PC-9 (cell line): ENCODE measurements at regions of chr7 and their contacts with region 1.

Region 1: DNA sequence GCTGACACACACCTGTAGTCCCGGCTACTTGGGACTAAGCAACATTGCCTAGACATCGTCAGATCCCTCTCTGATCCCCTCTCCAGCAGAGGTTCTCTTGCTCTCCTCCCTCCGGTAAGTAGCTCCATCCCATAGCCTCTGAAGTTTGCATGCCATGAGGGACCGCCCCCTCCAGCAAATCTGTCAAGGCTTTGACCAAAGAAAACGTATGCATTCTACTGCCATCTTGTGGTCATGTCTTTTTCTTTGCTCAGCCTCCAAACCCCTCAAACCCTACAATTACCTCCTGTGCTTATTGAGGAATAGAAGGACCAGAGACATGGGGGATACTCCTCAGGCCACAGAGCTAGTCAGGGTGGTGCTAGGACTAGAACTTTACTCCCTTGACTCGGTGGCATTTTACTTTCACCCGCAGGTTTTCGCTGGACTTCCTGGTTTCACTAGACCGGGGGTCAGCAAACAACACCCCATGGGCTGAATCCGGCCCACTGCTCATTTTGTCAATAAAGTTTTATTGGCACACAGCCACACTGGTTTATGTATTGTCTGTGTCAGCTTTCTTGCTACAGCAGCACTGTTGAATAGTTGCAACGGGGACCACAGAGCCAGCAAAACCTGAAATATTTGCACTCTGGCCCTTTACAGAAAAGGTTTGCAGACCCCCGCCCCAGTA is 202.6 kb upstream of the FOXK1 start:
- DNase-seq: peak; percentile 16 to 50
- H3K4me3 ChIP-seq: no peak overlapping the region
- H3K27ac ChIP-seq: no peak overlapping the region
- H3K4me1 ChIP-seq: no peaks in the 10 kb centered on the region
- H3K27me3 ChIP-seq: peaks cover 27% of the 10 kb centered on the region
- CTCF ChIP-seq: peak; percentile 67

Region 2: DNA sequence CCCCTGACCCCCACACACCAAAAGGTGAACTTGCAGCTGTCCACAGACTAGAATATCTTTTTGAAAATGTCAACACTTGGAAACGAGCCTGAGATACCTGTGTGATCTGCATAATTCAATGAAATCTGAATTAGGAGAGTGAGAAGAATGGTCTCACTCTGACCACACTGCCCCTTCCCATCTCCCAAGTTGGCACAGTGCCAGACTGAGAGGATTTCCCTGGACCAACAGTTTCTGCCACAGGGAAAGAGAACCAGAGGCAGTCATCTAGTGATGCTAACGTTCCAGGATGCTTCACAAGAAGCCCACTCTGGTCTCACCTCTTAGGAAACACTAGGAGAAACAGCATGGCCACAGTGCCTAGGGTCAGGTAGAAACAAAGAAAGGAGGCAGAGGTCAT is 699.5 kb before region 1 on chr7:
- CTCF ChIA-PET with region 1: interaction called, 20 read pairs
- POLR2A ChIA-PET with region 1: no interaction called
- intact Hi-C with region 1: no loop called
- DNase-seq: peak in 1 of 2 experiments; percentile 6
- H3K4me3 ChIP-seq: no peak overlapping the region
- H3K27ac ChIP-seq: no peak overlapping the region
- H3K4me1 ChIP-seq: no peaks in the 10 kb centered on the region
- H3K27me3 ChIP-seq: peaks cover 40% of the 10 kb centered on the region
- CTCF ChIP-seq: no peak

Region 3: GRCh38 chr7:4650433-4651047 is 171.0 kb after region 1 on chr7:
- CTCF ChIA-PET with region 1: no interaction called
- POLR2A ChIA-PET with region 1: no interaction called
- intact Hi-C with region 1: no loop called
- DNase-seq: no peak
- H3K4me3 ChIP-seq: no peak overlapping the region
- H3K27ac ChIP-seq: no peak overlapping the region
- H3K4me1 ChIP-seq: no peaks in the 10 kb centered on the region
- H3K27me3 ChIP-seq: no peaks in the 10 kb centered on the region
- CTCF ChIP-seq: no peak

Region 4: GRCh38 chr7:4878336-4879335 is 399.1 kb after region 1 on chr7:
- CTCF ChIA-PET with region 1: no interaction called
- POLR2A ChIA-PET with region 1: no interaction called
- intact Hi-C with region 1: no loop called
- DNase-seq: no peak
- H3K4me3 ChIP-seq: no peak overlapping the region
- H3K27ac ChIP-seq: no peak overlapping the region
- H3K4me1 ChIP-seq: no peaks in the 10 kb centered on the region
- H3K27me3 ChIP-seq: peaks cover 68% of the 10 kb centered on the region
- CTCF ChIP-seq: no peak

Region 5: DNA sequence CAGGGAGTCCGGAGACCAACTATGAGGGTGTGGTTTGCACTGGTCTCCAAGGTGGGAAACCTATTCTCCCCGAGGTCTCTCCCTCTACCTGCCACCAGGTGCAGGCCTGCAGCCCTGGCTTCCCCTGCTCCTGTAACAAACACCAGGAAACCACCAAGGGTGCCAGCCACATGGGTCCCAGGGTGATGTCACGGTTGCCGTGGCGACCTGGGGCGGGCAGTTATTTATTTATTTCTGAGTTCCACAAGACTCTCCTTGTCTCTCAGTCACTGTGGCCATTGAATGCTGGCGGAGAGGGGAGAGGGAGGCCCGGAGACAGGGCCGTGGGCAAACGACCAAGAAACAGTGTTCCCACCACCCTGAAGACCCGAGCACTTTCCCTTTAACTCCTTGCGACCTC is 452.4 kb after region 1 on chr7:
- CTCF ChIA-PET with region 1: no interaction called
- POLR2A ChIA-PET with region 1: no interaction called
- intact Hi-C with region 1: no loop called
- DNase-seq: peak in 1 of 2 experiments; percentile 61
- H3K4me3 ChIP-seq: no peak overlapping the region
- H3K27ac ChIP-seq: no peak overlapping the region
- H3K4me1 ChIP-seq: no peaks in the 10 kb centered on the region
- H3K27me3 ChIP-seq: peaks cover 51% of the 10 kb centered on the region
- CTCF ChIP-seq: no peak

Region 6: GRCh38 chr7:5838761-5839500 is 1359.4 kb after region 1 on chr7:
- CTCF ChIA-PET with region 1: no interaction called
- POLR2A ChIA-PET with region 1: no interaction called
- intact Hi-C with region 1: no loop called
- DNase-seq: no peak
- H3K4me3 ChIP-seq: no peak overlapping the region
- H3K27ac ChIP-seq: no peak overlapping the region
- H3K4me1 ChIP-seq: no peaks in the 10 kb centered on the region
- H3K27me3 ChIP-seq: no peaks in the 10 kb centered on the region
- CTCF ChIP-seq: no peak